ENCODE measurements at regions of chr3 and their contacts with region 1.

Region 1: GRCh38 chr3:142987080-142987700 is 14.2 kb upstream of the U2SURP start:
- DNase-seq: peak; percentile 50
- ATAC-seq: no peak
- H3K4me3 ChIP-seq: no peak overlapping the region
- H3K4me3 Mint-ChIP-seq: no peak overlapping the region
- H3K27ac ChIP-seq: no peak overlapping the region
- H3K27ac Mint-ChIP-seq: no peak overlapping the region
- H3K4me1 ChIP-seq: no peaks in the 10 kb centered on the region
- H3K4me1 Mint-ChIP-seq: no peaks in the 10 kb centered on the region
- H3K27me3 ChIP-seq: no peaks in the 10 kb centered on the region
- H3K27me3 Mint-ChIP-seq: peaks cover 5% of the 10 kb centered on the region
- CTCF ChIP-seq: peak; percentile 77

Region 2: GRCh38 chr3:142129516-142130171 is 857.5 kb before region 1 on chr3:
- CTCF ChIA-PET with region 1: no interaction called
- POLR2A ChIA-PET with region 1: no interaction called
- intact Hi-C with region 1: loop called (anchors 5 kb)
- DNase-seq: no peak
- ATAC-seq: no peak
- H3K4me3 ChIP-seq: no peak overlapping the region
- H3K4me3 Mint-ChIP-seq: no peak overlapping the region
- H3K27ac ChIP-seq: no peak overlapping the region
- H3K27ac Mint-ChIP-seq: no peak overlapping the region
- H3K4me1 ChIP-seq: no peaks in the 10 kb centered on the region
- H3K4me1 Mint-ChIP-seq: peaks cover 1% of the 10 kb centered on the region
- H3K27me3 ChIP-seq: no peaks in the 10 kb centered on the region
- H3K27me3 Mint-ChIP-seq: no peaks in the 10 kb centered on the region
- CTCF ChIP-seq: no peak

Region 3: DNA sequence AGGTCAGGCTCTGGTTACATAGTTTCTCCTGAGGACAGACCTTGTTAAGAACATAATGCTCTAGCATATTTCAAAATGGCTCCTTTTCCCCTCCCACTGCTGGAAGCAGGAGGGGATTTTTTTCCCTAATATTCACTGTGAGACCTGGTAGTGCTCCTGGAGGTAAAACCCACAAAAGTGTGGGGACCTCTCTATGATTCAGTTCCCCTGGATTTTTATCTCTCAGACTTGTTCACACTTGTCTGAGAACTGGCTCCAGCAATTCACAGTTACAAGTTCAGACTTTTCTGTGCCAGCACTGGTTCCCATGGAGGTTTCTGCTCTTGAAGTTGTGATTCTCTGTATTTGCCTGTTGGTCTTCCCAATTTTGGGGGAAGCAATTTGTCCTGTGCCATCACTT is 62.0 kb before region 1 on chr3:
- CTCF ChIA-PET with region 1: no interaction called
- POLR2A ChIA-PET with region 1: no interaction called
- intact Hi-C with region 1: no loop called
- DNase-seq: no peak
- ATAC-seq: no peak
- H3K4me3 ChIP-seq: no peak overlapping the region
- H3K4me3 Mint-ChIP-seq: no peak overlapping the region
- H3K27ac ChIP-seq: no peak overlapping the region
- H3K27ac Mint-ChIP-seq: no peak overlapping the region
- H3K4me1 ChIP-seq: no peaks in the 10 kb centered on the region
- H3K4me1 Mint-ChIP-seq: no peaks in the 10 kb centered on the region
- H3K27me3 ChIP-seq: peaks cover 0 to 14% (median 6%) of the 10 kb centered on the region in 4 experiments
- H3K27me3 Mint-ChIP-seq: peaks cover 49% of the 10 kb centered on the region
- CTCF ChIP-seq: no peak

Region 4: GRCh38 chr3:142940483-142940882 is 46.7 kb before region 1 on chr3:
- CTCF ChIA-PET with region 1: no interaction called
- POLR2A ChIA-PET with region 1: no interaction called
- intact Hi-C with region 1: no loop called
- DNase-seq: no peak
- ATAC-seq: no peak
- H3K4me3 ChIP-seq: no peak overlapping the region
- H3K4me3 Mint-ChIP-seq: no peak overlapping the region
- H3K27ac ChIP-seq: no peak overlapping the region
- H3K27ac Mint-ChIP-seq: no peak overlapping the region
- H3K4me1 ChIP-seq: no peaks in the 10 kb centered on the region
- H3K4me1 Mint-ChIP-seq: peaks cover 4% of the 10 kb centered on the region
- H3K27me3 ChIP-seq: peaks cover 0 to 2% (median 0%) of the 10 kb centered on the region in 4 experiments
- H3K27me3 Mint-ChIP-seq: peaks cover 17% of the 10 kb centered on the region
- CTCF ChIP-seq: no peak

Region 5: GRCh38 chr3:143010024-143010423 is 22.8 kb after region 1 on chr3:
- CTCF ChIA-PET with region 1: no interaction called
- POLR2A ChIA-PET with region 1: no interaction called
- intact Hi-C with region 1: no loop called
- DNase-seq: no peak
- ATAC-seq: no peak
- H3K4me3 ChIP-seq: no peak overlapping the region
- H3K4me3 Mint-ChIP-seq: no peak overlapping the region
- H3K27ac ChIP-seq: no peak overlapping the region
- H3K27ac Mint-ChIP-seq: no peak overlapping the region
- H3K4me1 ChIP-seq: peaks cover 5 to 10% of the 10 kb centered on the region in 2 donors
- H3K4me1 Mint-ChIP-seq: peaks cover 44% of the 10 kb centered on the region
- H3K27me3 ChIP-seq: no peaks in the 10 kb centered on the region
- H3K27me3 Mint-ChIP-seq: no peaks in the 10 kb centered on the region
- CTCF ChIP-seq: no peak

Measured in B cell (primary cell).